GM12878 (cell line): ENCODE measurements at regions of chr3 and their contacts with region 1.

Region 1: GRCh38 chr3:17894434-17895060 is 152.1 kb upstream of the TBC1D5 start:
- DNase-seq: no peak
- ATAC-seq: peak; percentile 88
- H3K4me3 ChIP-seq: no peak overlapping the region
- H3K27ac ChIP-seq: no peak overlapping the region
- H3K4me1 ChIP-seq: no peaks in the 10 kb centered on the region
- H3K27me3 ChIP-seq: no peaks in the 10 kb centered on the region
- CTCF ChIP-seq: peak; percentile 46 to 54 (median 48); a peak in 5 of 6 replicates
- EP300 ChIP-seq: no peak
- POLR2A ChIP-seq: no peak
- RAD21 ChIP-seq: peak; percentile 82

Region 2: GRCh38 chr3:17882981-17883380 is 11.6 kb before region 1 on chr3:
- CTCF ChIA-PET with region 1: interaction called, 10 read pairs
- POLR2A ChIA-PET with region 1: no interaction called
- RAD21 ChIA-PET with region 1: no interaction called
- SMC1A ChIA-PET with region 1: interaction called, 8 read pairs
- in situ Hi-C with region 1: no loop called
- intact Hi-C with region 1: no loop called
- DNase-seq: no peak
- ATAC-seq: no peak
- H3K4me3 ChIP-seq: no peak overlapping the region
- H3K27ac ChIP-seq: no peak overlapping the region
- H3K4me1 ChIP-seq: no peaks in the 10 kb centered on the region
- H3K27me3 ChIP-seq: no peaks in the 10 kb centered on the region; a peak in 2 of 4 replicates
- CTCF ChIP-seq: no peak
- EP300 ChIP-seq: no peak
- POLR2A ChIP-seq: no peak
- RAD21 ChIP-seq: no peak

Region 3: GRCh38 chr3:17938313-17938712 is 43.8 kb after region 1 on chr3:
- CTCF ChIA-PET with region 1: interaction called, 10 read pairs
- POLR2A ChIA-PET with region 1: no interaction called
- RAD21 ChIA-PET with region 1: no interaction called
- SMC1A ChIA-PET with region 1: interaction called, 4 read pairs
- in situ Hi-C with region 1: no loop called
- intact Hi-C with region 1: no loop called
- DNase-seq: no peak
- ATAC-seq: no peak
- H3K4me3 ChIP-seq: no peak overlapping the region
- H3K27ac ChIP-seq: no peak overlapping the region
- H3K4me1 ChIP-seq: no peaks in the 10 kb centered on the region
- H3K27me3 ChIP-seq: no peaks in the 10 kb centered on the region; a peak in 1 of 4 replicates
- CTCF ChIP-seq: no peak
- EP300 ChIP-seq: no peak
- POLR2A ChIP-seq: no peak
- RAD21 ChIP-seq: no peak

Region 4: GRCh38 chr3:18127174-18127858 is 232.8 kb after region 1 on chr3:
- CTCF ChIA-PET with region 1: interaction called, 33 read pairs
- POLR2A ChIA-PET with region 1: no interaction called
- RAD21 ChIA-PET with region 1: interaction called, 19 read pairs
- SMC1A ChIA-PET with region 1: interaction called, 22 read pairs
- in situ Hi-C with region 1: no loop called
- intact Hi-C with region 1: loop called (anchors 5 kb)
- DNase-seq: peak; percentile 45
- ATAC-seq: peak; percentile 97
- H3K4me3 ChIP-seq: no peak overlapping the region
- H3K27ac ChIP-seq: peak overlapping the region; percentile 27; the same call in 1 of the 2 replicates
- H3K4me1 ChIP-seq: peaks cover 6% of the 10 kb centered on the region; the same call in 1 of the 2 replicates
- H3K27me3 ChIP-seq: no peaks in the 10 kb centered on the region
- CTCF ChIP-seq: peak in 2 of 3 experiments; percentile 24 to 46; a peak in 4 of 6 replicates
- EP300 ChIP-seq: peak in 1 of 2 experiments; percentile 73; a peak in 2 of 4 replicates
- POLR2A ChIP-seq: no peak
- RAD21 ChIP-seq: peak; percentile 72

Region 5: DNA sequence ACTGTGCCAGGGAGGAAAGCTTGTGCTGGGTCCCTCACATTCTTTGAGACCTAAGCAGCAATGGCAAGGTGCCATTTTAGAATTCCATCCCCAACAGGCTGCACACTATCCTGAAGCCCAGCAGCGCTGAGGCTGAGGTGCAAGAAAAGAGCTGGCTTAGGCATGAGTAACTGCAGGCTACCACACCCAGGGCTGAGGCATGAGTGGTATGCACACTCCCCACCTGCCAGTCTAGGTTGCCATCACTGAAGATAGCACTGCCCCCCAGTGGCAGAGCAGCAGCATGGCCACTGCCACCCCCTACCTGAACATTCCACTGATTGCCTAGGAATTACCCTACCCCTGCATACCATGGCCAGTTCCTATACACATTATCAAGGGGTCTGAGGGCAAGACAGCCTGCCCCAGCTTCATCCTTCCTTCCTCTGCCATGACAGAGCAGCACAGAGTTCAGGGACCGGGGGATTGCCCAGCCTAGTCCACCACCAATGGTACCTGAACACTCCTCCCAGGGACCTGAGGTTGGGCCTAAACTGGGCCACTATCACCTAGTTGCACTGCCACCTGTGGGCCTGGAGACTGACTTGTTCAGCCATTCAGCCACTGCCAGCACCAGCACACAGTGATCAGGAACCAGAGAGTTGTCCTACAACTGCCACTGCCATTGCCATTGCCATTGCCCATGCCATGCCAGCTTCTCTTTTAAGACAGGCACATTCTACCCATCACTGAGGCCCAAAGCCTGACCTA is 400.8 kb after region 1 on chr3:
- CTCF ChIA-PET with region 1: interaction called, 41 read pairs
- POLR2A ChIA-PET with region 1: no interaction called
- RAD21 ChIA-PET with region 1: interaction called, 37 read pairs
- SMC1A ChIA-PET with region 1: interaction called, 41 read pairs
- in situ Hi-C with region 1: no loop called
- intact Hi-C with region 1: loop called (anchors 1 kb)
- DNase-seq: no peak
- ATAC-seq: peak; percentile 100
- H3K4me3 ChIP-seq: no peak overlapping the region
- H3K27ac ChIP-seq: no peak overlapping the region
- H3K4me1 ChIP-seq: no peaks in the 10 kb centered on the region
- H3K27me3 ChIP-seq: no peaks in the 10 kb centered on the region
- CTCF ChIP-seq: peak; percentile 78 to 90 (median 85)
- EP300 ChIP-seq: no peak
- POLR2A ChIP-seq: no peak
- RAD21 ChIP-seq: peak; percentile 66

Region 6: GRCh38 chr3:18389108-18389733 is 494.7 kb after region 1 on chr3:
- CTCF ChIA-PET with region 1: interaction called, 17 read pairs
- POLR2A ChIA-PET with region 1: no interaction called
- RAD21 ChIA-PET with region 1: interaction called, 5 read pairs
- SMC1A ChIA-PET with region 1: interaction called, 4 read pairs
- in situ Hi-C with region 1: no loop called
- intact Hi-C with region 1: loop called (anchors 2 kb)
- DNase-seq: no peak
- ATAC-seq: 0 out of 3 replicates have a peak, but pooled peaks have one; percentile 27
- H3K4me3 ChIP-seq: no peak overlapping the region
- H3K27ac ChIP-seq: no peak overlapping the region
- H3K4me1 ChIP-seq: no peaks in the 10 kb centered on the region
- H3K27me3 ChIP-seq: no peaks in the 10 kb centered on the region
- CTCF ChIP-seq: peak; percentile 36 to 43 (median 42); a peak in 5 of 6 replicates
- EP300 ChIP-seq: no peak
- POLR2A ChIP-seq: no peak
- RAD21 ChIP-seq: peak; percentile 72

Region 7: GRCh38 chr3:18758047-18758704 is 863.6 kb after region 1 on chr3:
- CTCF ChIA-PET with region 1: interaction called, 12 read pairs
- POLR2A ChIA-PET with region 1: no interaction called
- RAD21 ChIA-PET with region 1: no interaction called
- SMC1A ChIA-PET with region 1: interaction called, 3 read pairs
- in situ Hi-C with region 1: no loop called
- intact Hi-C with region 1: no loop called
- DNase-seq: peak; percentile 28
- ATAC-seq: peak; percentile 97
- H3K4me3 ChIP-seq: no peak overlapping the region
- H3K27ac ChIP-seq: no peak overlapping the region
- H3K4me1 ChIP-seq: no peaks in the 10 kb centered on the region
- H3K27me3 ChIP-seq: no peaks in the 10 kb centered on the region; a peak in 2 of 4 replicates
- CTCF ChIP-seq: peak; percentile 76 to 85 (median 76)
- EP300 ChIP-seq: no peak
- POLR2A ChIP-seq: no peak
- RAD21 ChIP-seq: peak; percentile 90